ENCODE measurements at regions of chr2 and their contacts with region 1.

Region 1: DNA sequence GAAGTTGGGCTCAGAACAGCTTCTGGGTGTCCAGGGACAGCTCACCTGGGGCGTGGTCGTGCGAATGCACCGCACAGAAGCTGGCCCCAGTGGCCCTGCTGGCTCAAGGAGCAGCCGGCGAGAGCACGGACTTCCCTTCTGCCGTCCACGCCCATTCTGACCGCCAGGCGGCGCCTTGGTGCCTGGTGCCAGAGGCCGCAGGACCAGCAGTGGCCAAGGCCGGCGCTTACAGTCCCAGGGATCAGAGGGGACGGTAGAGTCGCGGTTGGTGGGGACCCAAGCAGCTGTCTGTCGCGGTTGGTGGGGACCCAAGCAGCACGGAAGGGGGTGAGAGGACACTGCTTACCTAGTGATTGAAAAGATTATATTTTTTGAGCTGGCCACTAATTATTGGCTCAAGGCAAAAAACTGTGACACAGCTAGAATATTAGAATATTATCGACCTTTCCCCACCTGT is 25.7 kb downstream of the NPPC start:
- DNase-seq: peak in 8 of 9 donors; percentile 11 to 74 (median 22)
- ATAC-seq: peak; percentile 67
- H3K4me3 ChIP-seq: no peak overlapping the region
- H3K4me3 Mint-ChIP-seq: no peak overlapping the region
- H3K27ac ChIP-seq: no peak overlapping the region
- H3K27ac Mint-ChIP-seq: no peak overlapping the region
- H3K4me1 ChIP-seq: no peaks in the 10 kb centered on the region
- H3K4me1 Mint-ChIP-seq: no peaks in the 10 kb centered on the region
- H3K27me3 ChIP-seq: no peaks in the 10 kb centered on the region
- H3K27me3 Mint-ChIP-seq: peaks cover 0 to 12% (median 5%) of the 10 kb centered on the region in 5 donors

Region 2: DNA sequence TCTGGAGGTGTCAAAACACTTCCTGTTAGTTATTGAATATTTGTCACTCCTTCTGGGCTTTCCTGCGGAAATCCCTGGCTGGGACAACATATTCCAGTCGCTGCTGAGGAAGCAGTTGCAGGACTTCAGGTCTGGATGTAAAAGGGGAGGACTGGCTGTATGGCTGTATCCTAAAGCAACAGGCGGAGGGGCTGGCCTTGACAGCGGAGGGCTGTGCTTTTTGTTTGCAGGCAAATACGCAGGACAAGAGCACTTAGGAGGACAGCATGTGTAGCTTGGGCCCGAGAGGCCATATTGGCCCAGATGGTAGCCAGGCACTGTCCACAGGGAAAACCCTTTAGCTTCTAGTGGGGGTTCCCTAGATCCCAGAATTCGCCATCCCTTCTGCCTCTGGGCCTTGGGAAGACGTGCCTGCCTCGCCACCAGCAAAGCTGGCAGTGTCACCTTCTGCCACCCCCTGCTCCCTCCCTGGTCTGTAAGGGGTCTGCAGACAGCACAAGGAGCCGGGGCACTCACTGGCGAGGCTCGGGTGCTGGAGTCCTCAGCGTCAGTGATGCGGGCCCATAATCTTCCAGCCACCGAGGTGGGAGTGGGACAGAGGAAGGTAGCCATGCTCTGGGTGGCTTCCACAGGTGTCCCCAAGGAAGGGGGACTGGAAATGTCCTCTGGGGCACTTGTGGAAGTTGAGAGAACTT is 19.0 kb after region 1 on chr2:
- CTCF ChIA-PET with region 1: interaction called, 12 read pairs
- POLR2A ChIA-PET with region 1: no interaction called
- intact Hi-C with region 1: no loop called
- DNase-seq: no peak
- ATAC-seq: no peak
- H3K4me3 ChIP-seq: no peak overlapping the region
- H3K4me3 Mint-ChIP-seq: no peak overlapping the region
- H3K27ac ChIP-seq: no peak overlapping the region
- H3K27ac Mint-ChIP-seq: no peak overlapping the region
- H3K4me1 ChIP-seq: no peaks in the 10 kb centered on the region
- H3K4me1 Mint-ChIP-seq: peaks cover 0 to 10% (median 4%) of the 10 kb centered on the region in 7 donors
- H3K27me3 ChIP-seq: peaks cover 0 to 5% of the 10 kb centered on the region in 2 donors
- H3K27me3 Mint-ChIP-seq: peaks cover 10 to 24% (median 16%) of the 10 kb centered on the region in 5 donors

Region 3: GRCh38 chr2:232142049-232142448 is 241.5 kb after region 1 on chr2:
- CTCF ChIA-PET with region 1: no interaction called
- POLR2A ChIA-PET with region 1: no interaction called
- intact Hi-C with region 1: loop called in 1 of 2 experiments (anchors 5 kb)
- DNase-seq: peak in 4 of 9 donors; percentile 22 to 41 (median 30)
- ATAC-seq: no peak
- H3K4me3 ChIP-seq: no peak overlapping the region
- H3K4me3 Mint-ChIP-seq: no peak overlapping the region
- H3K27ac ChIP-seq: no peak overlapping the region
- H3K27ac Mint-ChIP-seq: peak overlapping the region in 1 of 9 donors; percentile 72
- H3K4me1 ChIP-seq: peaks cover 0 to 29% of the 10 kb centered on the region in 2 donors
- H3K4me1 Mint-ChIP-seq: peaks cover 15 to 47% (median 41%) of the 10 kb centered on the region in 7 donors
- H3K27me3 ChIP-seq: no peaks in the 10 kb centered on the region
- H3K27me3 Mint-ChIP-seq: no peaks in the 10 kb centered on the region

Region 4: GRCh38 chr2:232438951-232439757 is 538.6 kb after region 1 on chr2:
- CTCF ChIA-PET with region 1: interaction called, 24 read pairs
- POLR2A ChIA-PET with region 1: no interaction called
- intact Hi-C with region 1: no loop called
- DNase-seq: peak in 5 of 9 donors; percentile 20 to 54 (median 28)
- ATAC-seq: peak; percentile 52
- H3K4me3 ChIP-seq: no peak overlapping the region
- H3K4me3 Mint-ChIP-seq: no peak overlapping the region
- H3K27ac ChIP-seq: no peak overlapping the region
- H3K27ac Mint-ChIP-seq: no peak overlapping the region
- H3K4me1 ChIP-seq: no peaks in the 10 kb centered on the region
- H3K4me1 Mint-ChIP-seq: peaks cover 0 to 8% (median 3%) of the 10 kb centered on the region in 7 donors
- H3K27me3 ChIP-seq: no peaks in the 10 kb centered on the region
- H3K27me3 Mint-ChIP-seq: peaks cover 0 to 5% (median 0%) of the 10 kb centered on the region in 5 donors

Region 5: DNA sequence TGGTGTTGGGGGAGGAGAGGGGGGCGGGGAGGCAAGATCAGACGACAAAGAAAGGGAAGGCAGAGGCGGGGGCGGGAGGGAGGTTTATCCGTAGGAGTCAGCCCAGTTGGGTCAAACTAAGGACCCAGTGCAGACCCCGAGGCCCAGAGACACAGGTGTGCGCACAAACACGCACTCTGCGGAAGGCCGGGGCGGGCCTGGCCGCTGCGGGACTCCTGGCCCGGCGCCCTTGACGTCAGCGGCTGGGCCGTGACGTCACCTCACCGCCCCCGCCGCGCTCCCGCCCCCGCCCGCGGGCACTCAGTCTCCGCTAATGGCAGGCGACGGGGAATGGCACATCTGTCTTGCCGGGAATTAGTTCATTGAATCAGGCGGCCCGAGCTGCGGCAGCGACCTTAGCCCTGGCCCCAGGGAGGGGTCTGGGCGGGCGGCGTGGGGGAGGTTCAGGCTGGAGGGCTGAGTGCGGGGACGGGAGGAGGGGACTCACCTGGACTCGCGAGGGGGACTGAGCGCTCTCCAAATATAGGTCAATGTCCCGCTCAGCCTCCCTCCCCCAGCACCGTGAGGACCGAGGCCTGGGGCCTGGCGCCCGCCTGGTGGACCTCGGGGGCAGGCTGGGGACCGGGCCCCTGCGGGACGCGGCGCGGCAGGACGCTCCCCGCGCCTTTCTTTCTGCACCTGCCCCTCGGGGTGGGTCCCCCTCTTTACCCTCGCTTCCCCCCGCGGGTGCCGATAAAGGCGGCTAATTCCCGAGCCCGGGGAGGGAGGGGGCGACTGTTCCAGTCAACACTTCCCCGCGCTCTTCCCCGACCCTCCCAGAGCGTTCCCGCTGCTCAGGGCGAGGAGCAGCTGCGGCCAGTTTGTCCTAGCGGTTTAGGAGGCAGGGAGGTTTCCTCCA is 602.6 kb after region 1 on chr2:
- CTCF ChIA-PET with region 1: no interaction called
- POLR2A ChIA-PET with region 1: no interaction called
- intact Hi-C with region 1: no loop called
- DNase-seq: peak; percentile 36 to 64 (median 52)
- ATAC-seq: peak; percentile 72
- H3K4me3 ChIP-seq: no peak overlapping the region
- H3K4me3 Mint-ChIP-seq: peak overlapping the region in 8 of 10 donors; percentile 21 to 81 (median 46)
- H3K27ac ChIP-seq: no peak overlapping the region
- H3K27ac Mint-ChIP-seq: peak overlapping the region in 3 of 9 donors; percentile 55 to 67 (median 57)
- H3K4me1 ChIP-seq: peaks cover 0 to 4% of the 10 kb centered on the region in 2 donors
- H3K4me1 Mint-ChIP-seq: peaks cover 0 to 9% (median 4%) of the 10 kb centered on the region in 7 donors
- H3K27me3 ChIP-seq: peaks cover 0 to 7% of the 10 kb centered on the region in 2 donors
- H3K27me3 Mint-ChIP-seq: peaks cover 34 to 60% (median 42%) of the 10 kb centered on the region in 5 donors